ENCODE measurements at regions of chr17 and their contacts with region 1.

Region 1: DNA sequence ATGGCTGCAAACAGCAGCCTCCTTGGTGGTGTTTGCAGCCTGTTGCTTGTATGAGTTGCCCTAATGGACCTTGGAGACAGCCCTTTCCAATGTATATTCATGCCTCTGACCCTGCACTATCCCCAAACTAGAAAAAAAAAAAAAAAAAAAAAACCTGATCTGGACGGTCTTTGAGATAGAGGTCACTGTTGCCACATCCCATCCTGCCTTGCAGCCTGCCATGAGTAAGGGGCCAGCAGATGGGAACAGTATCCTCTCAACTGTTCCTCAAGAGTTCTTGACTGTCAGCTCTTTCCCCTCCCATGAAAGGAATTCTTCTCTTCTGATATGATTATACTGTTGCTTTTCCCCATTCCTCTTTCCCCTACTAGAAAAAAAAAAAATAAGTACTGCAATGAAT is 152.4 kb downstream of the SSH2 start:
- DNase-seq: no peak
- H3K4me3 Mint-ChIP-seq: no peak overlapping the region
- H3K27ac Mint-ChIP-seq: no peak overlapping the region
- H3K4me1 Mint-ChIP-seq: peaks cover 14% of the 10 kb centered on the region
- H3K27me3 Mint-ChIP-seq: no peaks in the 10 kb centered on the region

Region 2: DNA sequence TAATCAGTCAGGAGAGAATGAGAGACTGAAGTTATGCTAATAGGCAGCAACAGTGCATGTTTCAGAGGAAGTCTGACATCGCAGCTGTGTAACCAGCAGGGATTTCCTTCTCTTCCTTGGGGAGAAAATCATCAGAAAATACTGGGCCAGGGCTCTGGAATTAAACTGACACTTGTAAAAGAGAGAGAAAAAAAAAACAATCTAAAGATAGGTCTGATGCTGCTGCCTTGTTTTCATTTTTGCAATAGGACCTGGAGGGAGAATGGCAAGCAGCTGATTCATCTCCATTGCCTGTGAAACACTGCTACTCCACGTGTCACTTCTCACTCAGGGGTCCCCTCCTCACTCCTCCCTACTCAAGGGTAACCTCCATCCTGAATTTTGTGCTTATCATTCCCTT is 137.2 kb before region 1 on chr17:
- CTCF ChIA-PET with region 1: interaction called, 31 read pairs
- POLR2A ChIA-PET with region 1: interaction called, 3 read pairs
- DNase-seq: no peak
- H3K4me3 Mint-ChIP-seq: no peak overlapping the region
- H3K27ac Mint-ChIP-seq: no peak overlapping the region
- H3K4me1 Mint-ChIP-seq: peaks cover 19% of the 10 kb centered on the region
- H3K27me3 Mint-ChIP-seq: no peaks in the 10 kb centered on the region

Region 3: GRCh38 chr17:29909236-29910003 is 131.8 kb after region 1 on chr17:
- CTCF ChIA-PET with region 1: no interaction called
- POLR2A ChIA-PET with region 1: no interaction called
- DNase-seq: no peak
- H3K4me3 Mint-ChIP-seq: no peak overlapping the region
- H3K27ac Mint-ChIP-seq: no peak overlapping the region
- H3K4me1 Mint-ChIP-seq: peaks cover 14% of the 10 kb centered on the region
- H3K27me3 Mint-ChIP-seq: no peaks in the 10 kb centered on the region